WTC11 (cell line): ENCODE measurements at regions of chr11 and their contacts with region 1.

Region 1: DNA sequence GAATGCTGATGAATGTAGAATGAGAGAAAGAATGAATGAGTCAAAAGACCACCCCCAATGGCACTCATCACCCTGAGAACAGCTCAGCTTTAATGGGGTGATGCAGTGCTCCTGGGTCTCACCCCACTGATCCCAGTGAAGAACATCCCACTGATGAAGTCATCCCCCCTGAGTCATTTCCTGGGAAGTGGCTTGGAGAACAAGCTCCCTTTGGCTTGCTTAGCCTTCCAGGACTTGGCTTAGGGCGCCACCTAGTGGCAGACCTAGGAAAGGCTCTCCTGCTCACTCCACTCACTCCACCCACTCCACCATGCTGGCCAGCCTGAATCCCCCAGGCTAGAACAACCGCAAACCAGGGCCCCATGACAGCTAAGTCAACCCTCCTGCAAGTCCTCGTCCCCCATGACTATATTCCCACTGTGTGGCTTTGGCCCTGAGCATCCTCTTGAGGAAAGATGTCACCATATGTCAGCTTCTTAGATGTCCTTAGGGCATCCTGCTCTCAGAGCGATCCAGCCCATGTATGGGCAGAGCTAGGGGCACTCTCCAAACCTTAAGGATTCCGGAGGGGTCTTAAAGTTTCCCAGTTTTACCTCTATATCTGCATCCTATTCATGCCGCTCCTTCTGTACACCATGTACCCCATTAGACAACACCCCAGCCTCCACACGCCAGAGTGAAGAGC is 17.8 kb upstream of the TMPRSS13 start:
- DNase-seq: peak; percentile 94
- ATAC-seq: peak; percentile 97
- H3K4me3 Mint-ChIP-seq: no peak overlapping the region
- H3K27ac Mint-ChIP-seq: 0 out of 2 replicates have a peak overlapping the region, but pooled peaks have one; percentile 28
- H3K4me1 Mint-ChIP-seq: no peaks in the 10 kb centered on the region
- H3K27me3 Mint-ChIP-seq: no peaks in the 10 kb centered on the region
- CTCF ChIP-seq: peak; percentile 96

Region 2: DNA sequence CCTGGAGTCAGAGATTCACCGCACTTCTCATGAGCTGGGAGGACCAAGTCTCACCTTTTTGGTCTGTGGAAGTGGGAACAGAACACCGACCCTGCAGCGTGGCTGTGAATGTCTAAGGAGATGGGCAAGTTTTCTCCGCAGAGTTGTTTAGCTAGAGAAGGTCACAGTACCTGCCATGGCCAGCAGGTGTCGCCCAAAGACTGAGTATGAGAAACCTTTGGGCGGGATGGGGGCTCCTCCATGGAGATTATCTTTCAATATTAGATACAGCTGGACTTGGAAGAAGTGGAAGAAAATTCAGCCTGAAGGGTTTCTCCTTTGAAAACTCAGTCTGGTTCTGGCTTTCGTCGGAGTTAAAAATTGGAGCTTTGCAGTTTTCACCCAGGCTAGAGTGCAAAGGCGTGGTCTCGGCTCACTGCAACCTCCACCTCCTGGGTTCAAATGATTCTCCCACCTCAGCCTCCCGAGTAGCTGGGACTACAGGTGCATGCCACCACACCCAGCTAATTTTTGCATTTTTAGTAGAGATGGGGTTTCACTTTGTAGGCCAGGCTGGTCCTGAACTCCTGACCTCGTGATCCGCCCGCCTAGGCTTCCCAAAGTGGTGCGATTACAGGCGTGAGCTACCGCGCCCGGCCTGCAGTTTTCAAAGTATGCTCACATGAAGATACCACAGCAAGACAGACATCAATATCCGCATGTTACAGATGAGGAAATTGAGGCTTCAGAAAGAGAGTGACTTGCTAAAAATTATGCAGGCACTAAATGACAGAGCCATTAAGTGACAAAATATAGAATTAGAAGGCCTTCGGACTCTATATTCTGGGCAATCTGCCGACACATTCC is 139.3 kb before region 1 on chr11:
- CTCF ChIA-PET with region 1: interaction called, 71 read pairs
- POLR2A ChIA-PET with region 1: no interaction called
- DNase-seq: peak; percentile 85
- ATAC-seq: peak; percentile 69
- H3K4me3 Mint-ChIP-seq: no peak overlapping the region
- H3K27ac Mint-ChIP-seq: no peak overlapping the region
- H3K4me1 Mint-ChIP-seq: no peaks in the 10 kb centered on the region
- H3K27me3 Mint-ChIP-seq: peaks cover 8% of the 10 kb centered on the region
- CTCF ChIP-seq: peak; percentile 85

Region 3: GRCh38 chr11:117843666-117844484 is 103.1 kb before region 1 on chr11:
- CTCF ChIA-PET with region 1: interaction called, 83 read pairs
- POLR2A ChIA-PET with region 1: no interaction called
- DNase-seq: peak; percentile 84
- ATAC-seq: peak; percentile 79
- H3K4me3 Mint-ChIP-seq: no peak overlapping the region
- H3K27ac Mint-ChIP-seq: no peak overlapping the region
- H3K4me1 Mint-ChIP-seq: no peaks in the 10 kb centered on the region
- H3K27me3 Mint-ChIP-seq: no peaks in the 10 kb centered on the region
- CTCF ChIP-seq: peak; percentile 99

Region 4: GRCh38 chr11:117907251-117907981 is 39.6 kb before region 1 on chr11:
- CTCF ChIA-PET with region 1: interaction called, 83 read pairs
- POLR2A ChIA-PET with region 1: no interaction called
- DNase-seq: peak; percentile 83
- ATAC-seq: peak; percentile 92
- H3K4me3 Mint-ChIP-seq: peak overlapping the region; percentile 35
- H3K27ac Mint-ChIP-seq: peak overlapping the region; percentile 43; the same call in 1 of the 2 replicates
- H3K4me1 Mint-ChIP-seq: peaks cover 15% of the 10 kb centered on the region
- H3K27me3 Mint-ChIP-seq: no peaks in the 10 kb centered on the region
- CTCF ChIP-seq: no peak

Region 5: DNA sequence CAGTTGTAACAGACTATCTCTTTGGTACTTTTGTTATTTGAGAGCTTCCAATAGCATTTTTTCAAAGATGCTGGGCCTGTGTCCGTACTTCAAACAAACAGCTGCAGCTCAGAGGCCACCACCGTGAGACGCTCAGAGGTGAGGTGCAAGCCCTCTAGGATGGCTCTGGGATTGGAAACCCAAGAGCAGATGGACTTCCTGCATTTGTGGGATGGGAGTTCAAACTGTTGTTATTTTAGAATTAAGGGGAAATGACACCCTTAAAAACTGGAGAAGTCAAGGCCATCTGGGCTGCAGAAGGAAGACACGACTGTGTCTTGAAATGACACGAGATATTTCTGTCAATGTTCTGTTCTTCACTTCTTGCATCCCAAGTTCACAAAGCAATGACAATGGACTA is 30.0 kb after region 1 on chr11:
- CTCF ChIA-PET with region 1: interaction called, 10 read pairs
- POLR2A ChIA-PET with region 1: interaction called, 4 read pairs
- DNase-seq: no peak
- ATAC-seq: no peak
- H3K4me3 Mint-ChIP-seq: no peak overlapping the region
- H3K27ac Mint-ChIP-seq: no peak overlapping the region
- H3K4me1 Mint-ChIP-seq: peaks cover 5% of the 10 kb centered on the region
- H3K27me3 Mint-ChIP-seq: peaks cover 2% of the 10 kb centered on the region
- CTCF ChIP-seq: no peak

Region 6: DNA sequence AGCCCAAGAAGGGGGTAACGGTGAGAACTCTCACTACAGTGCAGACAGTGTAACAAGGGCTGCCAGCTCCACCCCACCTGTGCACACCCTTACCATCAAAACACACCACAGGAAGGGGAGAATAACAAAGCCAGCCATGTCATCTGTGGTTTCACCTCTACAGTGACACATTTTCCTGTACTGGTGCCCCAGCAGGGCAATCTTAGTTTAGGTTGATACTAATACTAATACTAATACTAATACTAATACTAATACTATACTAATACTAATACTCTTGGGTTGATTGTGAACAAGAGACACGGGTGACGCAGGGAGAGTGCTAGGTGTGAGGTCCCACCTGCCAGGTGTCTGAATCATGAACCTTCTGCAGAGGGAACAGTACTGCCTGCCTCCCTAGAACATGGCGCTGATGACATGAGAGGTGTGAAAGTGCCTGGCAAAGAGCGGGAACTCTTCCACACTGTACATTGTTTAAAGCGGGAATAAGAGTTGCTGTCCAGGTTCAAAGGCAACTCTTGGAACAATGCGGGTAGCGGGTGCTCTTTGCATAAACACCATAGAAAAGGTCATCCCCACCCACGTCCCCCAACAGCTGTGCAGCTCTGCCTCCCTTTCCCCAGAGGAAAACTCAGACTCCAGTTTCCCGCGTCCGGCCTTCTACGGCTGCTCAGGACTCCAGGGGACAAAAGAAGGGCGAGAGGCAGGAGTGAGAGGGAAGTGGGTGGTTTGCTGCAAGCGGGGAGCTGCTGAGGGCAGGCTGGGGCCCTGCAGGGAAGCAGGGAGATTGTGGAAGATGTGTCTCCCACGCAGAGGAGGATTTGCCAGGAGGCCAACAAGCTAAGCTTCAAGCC is 104.9 kb after region 1 on chr11:
- CTCF ChIA-PET with region 1: interaction called, 40 read pairs
- POLR2A ChIA-PET with region 1: no interaction called
- DNase-seq: no peak
- ATAC-seq: no peak
- H3K4me3 Mint-ChIP-seq: no peak overlapping the region
- H3K27ac Mint-ChIP-seq: no peak overlapping the region
- H3K4me1 Mint-ChIP-seq: no peaks in the 10 kb centered on the region; the same call in 1 of the 2 replicates
- H3K27me3 Mint-ChIP-seq: no peaks in the 10 kb centered on the region
- CTCF ChIP-seq: no peak